Activated CD4-positive, alpha-beta T cell treated with anti-CD3 and anti-CD28 coated beads for 36 hours (primary cell): ENCODE measurements at regions of chr3 and their contacts with region 1.

Region 1: GRCh38 chr3:186617038-186617946 is 4.4 kb downstream of the AHSG start:
- DNase-seq: peak; percentile 95
- ATAC-seq: peak; percentile 96
- H3K4me3 Mint-ChIP-seq: peak overlapping the region; percentile 32
- H3K27ac Mint-ChIP-seq: peak overlapping the region; percentile 11
- H3K4me1 Mint-ChIP-seq: peaks cover 23% of the 10 kb centered on the region
- H3K27me3 Mint-ChIP-seq: peaks cover 26% of the 10 kb centered on the region

Region 2: GRCh38 chr3:185900226-185900625 is 717.1 kb before region 1 on chr3:
- CTCF ChIA-PET with region 1: no interaction called
- POLR2A ChIA-PET with region 1: no interaction called
- intact Hi-C with region 1: no loop called
- DNase-seq: peak; percentile 21
- ATAC-seq: no peak
- H3K4me3 Mint-ChIP-seq: no peak overlapping the region
- H3K27ac Mint-ChIP-seq: no peak overlapping the region
- H3K4me1 Mint-ChIP-seq: no peaks in the 10 kb centered on the region
- H3K27me3 Mint-ChIP-seq: peaks cover 4% of the 10 kb centered on the region

Region 3: DNA sequence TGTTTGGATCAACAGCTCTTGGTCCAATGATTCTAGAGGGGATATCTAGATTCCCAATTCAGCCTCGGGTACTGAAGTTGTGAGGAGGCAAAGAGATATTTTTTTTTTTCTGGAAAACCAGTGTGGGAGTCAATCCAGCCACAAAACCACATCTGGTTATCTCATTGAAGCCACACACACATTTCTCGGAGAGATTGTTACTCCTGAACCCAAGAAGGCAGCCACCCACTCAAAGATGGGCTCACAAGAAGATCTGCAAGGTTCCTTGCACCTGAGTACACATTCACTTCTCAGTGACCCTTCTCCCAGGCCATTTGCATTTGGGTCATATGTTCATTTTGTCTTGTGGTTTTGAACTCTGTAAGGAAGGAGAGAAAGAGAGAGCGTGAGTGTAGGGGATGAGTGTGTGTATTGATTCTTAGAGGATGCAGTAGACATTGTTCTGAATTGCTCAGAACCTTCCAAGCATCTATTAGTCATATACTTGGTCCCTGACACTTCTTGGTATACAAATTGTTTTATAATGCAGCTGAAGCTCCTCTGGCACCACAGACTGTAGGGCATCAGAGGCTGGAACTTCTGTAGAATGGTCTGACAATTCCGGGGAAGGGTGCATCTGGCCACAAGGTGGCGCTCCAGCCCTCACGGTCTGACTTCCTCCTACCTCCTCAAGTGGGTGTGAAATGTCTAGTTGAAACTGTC is 640.2 kb before region 1 on chr3:
- CTCF ChIA-PET with region 1: interaction called, 38 read pairs
- POLR2A ChIA-PET with region 1: no interaction called
- intact Hi-C with region 1: loop called (anchors 1 to 2 kb)
- DNase-seq: peak; percentile 93
- ATAC-seq: peak; percentile 91
- H3K4me3 Mint-ChIP-seq: no peak overlapping the region
- H3K27ac Mint-ChIP-seq: peak overlapping the region; percentile 11
- H3K4me1 Mint-ChIP-seq: peaks cover 18% of the 10 kb centered on the region
- H3K27me3 Mint-ChIP-seq: no peaks in the 10 kb centered on the region

Region 4: DNA sequence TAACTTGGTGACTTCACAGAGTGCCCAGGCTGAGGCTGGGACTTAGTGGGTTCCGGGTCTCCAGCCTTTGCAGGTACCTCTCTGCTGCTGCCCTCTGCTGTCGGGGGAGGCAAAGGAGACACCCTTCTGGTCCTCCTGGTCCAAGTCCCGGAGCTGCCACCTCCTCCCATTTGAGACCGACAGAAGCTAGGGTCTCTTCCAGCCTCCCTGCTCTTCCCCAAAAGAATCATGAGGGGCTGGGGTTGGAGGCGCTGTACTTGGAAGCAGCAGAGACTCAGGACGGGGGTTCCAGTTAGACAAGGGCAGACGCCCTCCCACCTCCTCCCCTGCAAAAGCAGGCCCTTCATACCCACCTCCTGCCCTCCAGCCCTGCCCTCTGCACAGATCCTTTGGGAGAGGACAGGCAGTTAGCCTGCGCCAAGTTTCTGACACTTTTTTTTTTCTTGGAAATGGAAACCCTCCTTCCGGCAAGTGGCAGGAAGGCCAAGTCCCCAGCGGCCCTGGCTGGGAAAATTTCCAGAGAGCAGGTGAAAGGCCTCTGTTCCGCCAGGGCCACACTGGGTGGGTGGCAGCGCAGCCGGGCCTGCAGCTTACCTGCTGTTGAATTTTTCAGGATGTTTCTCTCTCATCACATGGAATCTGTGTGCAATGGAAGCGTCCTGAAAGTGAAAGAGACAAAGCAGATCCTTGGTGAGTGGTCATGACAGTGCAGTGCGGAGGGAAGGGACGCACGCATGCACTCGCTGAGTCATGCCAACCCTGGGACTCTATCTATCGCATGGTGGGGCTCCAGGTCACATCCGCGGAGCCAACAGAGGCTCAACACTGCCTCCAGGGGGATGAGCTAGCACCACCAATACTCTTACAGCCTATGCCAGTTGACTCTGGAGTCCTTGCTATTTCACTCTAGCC is 375.1 kb before region 1 on chr3:
- CTCF ChIA-PET with region 1: interaction called, 4 read pairs
- POLR2A ChIA-PET with region 1: no interaction called
- intact Hi-C with region 1: loop called in 1 of 2 experiments (anchors 10 kb)
- DNase-seq: peak; percentile 84
- ATAC-seq: peak; percentile 97
- H3K4me3 Mint-ChIP-seq: peak overlapping the region; percentile 30
- H3K27ac Mint-ChIP-seq: no peak overlapping the region
- H3K4me1 Mint-ChIP-seq: peaks cover 9% of the 10 kb centered on the region
- H3K27me3 Mint-ChIP-seq: peaks cover 9% of the 10 kb centered on the region

Region 5: GRCh38 chr3:186570096-186570940 is 47.0 kb before region 1 on chr3 and contains the start of gene DNAJB11:
- CTCF ChIA-PET with region 1: interaction called, 13 read pairs
- POLR2A ChIA-PET with region 1: interaction called, 3 read pairs
- intact Hi-C with region 1: loop called in 1 of 2 experiments (anchors 1 kb)
- DNase-seq: peak; percentile 100
- ATAC-seq: peak; percentile 92
- H3K4me3 Mint-ChIP-seq: peak within 1 kb of the TSS; percentile 93
- H3K27ac Mint-ChIP-seq: peak within 1 kb of the TSS; percentile 95
- H3K4me1 Mint-ChIP-seq: peaks cover 50% of the 10 kb centered on the region
- H3K27me3 Mint-ChIP-seq: no peaks in the 10 kb centered on the region
- total RNA-seq, gene DNAJB11: 30.9 to 36.6 TPM

Region 6: DNA sequence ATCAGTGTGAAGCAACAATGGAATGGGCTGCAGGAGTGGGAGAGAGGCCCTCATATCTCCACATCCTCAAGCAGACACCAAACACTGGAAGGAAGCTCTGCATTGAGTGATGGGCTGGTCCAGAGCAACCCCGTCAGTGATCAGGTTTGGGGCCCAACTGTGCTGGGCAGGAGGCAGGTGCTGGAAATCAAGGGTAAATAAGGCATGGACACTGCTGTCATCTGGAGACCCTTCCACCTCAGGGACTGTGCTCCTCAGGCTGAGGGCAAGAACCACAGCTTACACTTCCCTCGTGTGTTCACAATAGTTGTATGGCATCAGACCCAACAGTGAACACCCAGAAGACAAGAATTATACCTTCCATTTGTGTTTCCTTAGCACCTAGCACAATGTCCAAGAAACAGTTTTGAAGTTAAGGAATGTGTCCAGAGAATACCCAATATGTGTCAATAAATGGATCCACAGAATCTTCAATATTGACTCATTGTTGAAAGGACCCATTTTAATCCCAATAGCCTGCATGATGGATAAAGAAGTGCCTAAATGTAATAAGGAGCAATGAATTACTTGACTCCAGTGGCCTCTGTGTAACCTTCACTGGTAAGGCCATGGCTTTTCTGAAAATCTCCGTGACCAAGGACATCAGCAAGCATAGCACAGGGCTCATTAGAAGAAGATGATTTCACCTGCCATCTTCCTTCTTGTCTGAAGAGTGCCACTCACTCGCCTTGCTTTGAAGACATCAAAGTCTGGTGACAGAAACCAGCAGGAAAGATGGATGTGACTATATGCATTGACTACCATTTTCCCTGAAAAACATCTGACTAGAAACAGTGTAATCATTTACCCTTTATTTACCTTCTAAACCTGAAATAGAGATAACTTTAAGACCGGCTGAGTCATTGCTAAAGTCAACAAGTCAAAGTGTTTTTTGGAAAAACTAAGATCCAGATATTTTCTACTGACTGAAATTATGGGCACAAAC is 11.4 kb before region 1 on chr3:
- CTCF ChIA-PET with region 1: interaction called, 28 read pairs
- POLR2A ChIA-PET with region 1: no interaction called
- intact Hi-C with region 1: no loop called
- DNase-seq: no peak
- ATAC-seq: no peak
- H3K4me3 Mint-ChIP-seq: no peak overlapping the region
- H3K27ac Mint-ChIP-seq: no peak overlapping the region
- H3K4me1 Mint-ChIP-seq: no peaks in the 10 kb centered on the region
- H3K27me3 Mint-ChIP-seq: no peaks in the 10 kb centered on the region

Region 7: DNA sequence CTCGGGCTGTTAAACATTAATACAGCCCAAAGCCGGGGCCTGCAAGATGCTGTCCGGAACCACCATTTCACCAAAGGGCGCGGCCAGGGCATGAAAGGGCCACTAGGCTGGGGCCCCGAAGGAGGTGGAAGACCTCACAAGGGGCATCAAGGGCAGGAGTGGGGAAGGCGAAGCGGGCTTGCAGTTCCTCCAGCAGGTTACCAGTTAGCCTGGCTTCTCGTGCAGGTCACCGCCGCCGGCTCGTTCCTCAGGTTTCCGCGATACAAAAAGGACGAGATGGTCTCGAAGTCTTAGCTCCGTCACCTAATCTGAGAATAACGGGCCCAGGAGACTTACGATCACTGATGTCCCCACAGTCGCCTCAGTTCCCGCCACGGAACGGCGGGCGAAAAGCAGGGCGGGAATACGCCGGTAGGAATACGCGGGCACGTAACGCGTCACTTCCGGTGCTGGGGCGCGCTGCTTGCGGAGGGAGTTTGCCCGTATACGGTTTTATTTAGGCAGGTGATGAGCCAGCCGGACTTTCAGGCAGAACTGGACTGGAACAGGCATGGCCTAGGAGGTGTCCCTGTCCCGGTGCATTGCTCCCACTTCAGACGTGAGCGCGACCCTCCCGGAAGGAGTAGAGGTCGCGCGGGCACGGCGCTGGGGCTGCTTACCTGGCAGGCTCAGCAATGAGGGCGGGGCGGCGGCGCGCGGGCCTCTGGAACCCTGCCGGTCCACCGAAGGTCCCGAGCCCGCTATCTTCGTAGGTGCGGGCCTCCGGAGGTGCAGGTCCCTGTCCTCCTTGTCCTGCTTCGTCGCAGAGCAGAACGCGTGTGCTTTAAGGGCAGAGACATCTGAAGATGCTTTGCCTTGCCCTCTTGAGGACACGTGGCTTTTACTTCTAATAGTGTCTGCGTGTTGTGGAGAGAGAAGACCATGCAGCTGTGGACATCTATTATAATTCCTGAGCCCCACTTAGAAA is 189.1 kb after region 1 on chr3 and contains the start of gene RFC4:
- CTCF ChIA-PET with region 1: interaction called, 14 read pairs
- POLR2A ChIA-PET with region 1: no interaction called
- intact Hi-C with region 1: loop called in 1 of 2 experiments (anchors 5 kb)
- DNase-seq: peak; percentile 93
- ATAC-seq: peak; percentile 89
- H3K4me3 Mint-ChIP-seq: peak within 1 kb of the TSS; percentile 90
- H3K27ac Mint-ChIP-seq: peak within 1 kb of the TSS; percentile 92
- H3K4me1 Mint-ChIP-seq: peaks cover 26% of the 10 kb centered on the region
- H3K27me3 Mint-ChIP-seq: no peaks in the 10 kb centered on the region
- total RNA-seq, gene RFC4: 128 to 130 TPM

Region 8: DNA sequence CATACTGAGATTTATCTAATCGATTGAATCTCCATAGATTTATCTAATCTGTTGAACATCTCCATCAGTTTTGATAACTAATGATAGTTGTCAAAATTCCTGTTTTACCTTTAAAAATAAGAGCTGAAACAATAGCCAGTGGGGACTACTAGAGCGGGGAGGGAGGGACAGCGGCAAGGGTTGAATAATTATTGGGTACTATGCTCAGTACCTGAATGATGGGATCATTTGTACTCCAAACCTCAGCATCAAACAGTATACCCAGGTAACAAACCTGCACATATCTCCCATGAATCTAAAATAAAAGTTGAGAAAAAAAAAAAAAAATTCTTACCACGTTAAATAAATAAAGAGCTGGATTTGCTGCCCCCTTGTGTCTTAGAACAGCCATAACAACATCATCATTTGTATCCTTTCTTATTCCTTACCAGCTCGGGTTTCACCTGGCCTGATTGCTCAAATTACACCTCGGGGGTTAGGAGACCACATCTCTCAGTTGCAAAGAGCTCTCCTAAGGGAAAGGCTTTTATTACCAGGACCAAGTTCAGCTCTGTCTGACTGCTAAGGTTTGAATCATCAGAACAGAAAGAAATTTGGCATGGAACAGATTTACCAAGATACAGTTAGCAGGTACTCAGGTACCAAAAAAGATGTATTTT is 547.7 kb after region 1 on chr3:
- CTCF ChIA-PET with region 1: interaction called, 5 read pairs
- POLR2A ChIA-PET with region 1: no interaction called
- intact Hi-C with region 1: loop called in 1 of 2 experiments (anchors 10 kb)
- DNase-seq: peak; percentile 36
- ATAC-seq: peak; percentile 70
- H3K4me3 Mint-ChIP-seq: no peak overlapping the region
- H3K27ac Mint-ChIP-seq: no peak overlapping the region
- H3K4me1 Mint-ChIP-seq: peaks cover 2% of the 10 kb centered on the region
- H3K27me3 Mint-ChIP-seq: no peaks in the 10 kb centered on the region